AG04449 (cell line): ENCODE measurements at regions of chr4 and their contacts with region 1.

Region 1: DNA sequence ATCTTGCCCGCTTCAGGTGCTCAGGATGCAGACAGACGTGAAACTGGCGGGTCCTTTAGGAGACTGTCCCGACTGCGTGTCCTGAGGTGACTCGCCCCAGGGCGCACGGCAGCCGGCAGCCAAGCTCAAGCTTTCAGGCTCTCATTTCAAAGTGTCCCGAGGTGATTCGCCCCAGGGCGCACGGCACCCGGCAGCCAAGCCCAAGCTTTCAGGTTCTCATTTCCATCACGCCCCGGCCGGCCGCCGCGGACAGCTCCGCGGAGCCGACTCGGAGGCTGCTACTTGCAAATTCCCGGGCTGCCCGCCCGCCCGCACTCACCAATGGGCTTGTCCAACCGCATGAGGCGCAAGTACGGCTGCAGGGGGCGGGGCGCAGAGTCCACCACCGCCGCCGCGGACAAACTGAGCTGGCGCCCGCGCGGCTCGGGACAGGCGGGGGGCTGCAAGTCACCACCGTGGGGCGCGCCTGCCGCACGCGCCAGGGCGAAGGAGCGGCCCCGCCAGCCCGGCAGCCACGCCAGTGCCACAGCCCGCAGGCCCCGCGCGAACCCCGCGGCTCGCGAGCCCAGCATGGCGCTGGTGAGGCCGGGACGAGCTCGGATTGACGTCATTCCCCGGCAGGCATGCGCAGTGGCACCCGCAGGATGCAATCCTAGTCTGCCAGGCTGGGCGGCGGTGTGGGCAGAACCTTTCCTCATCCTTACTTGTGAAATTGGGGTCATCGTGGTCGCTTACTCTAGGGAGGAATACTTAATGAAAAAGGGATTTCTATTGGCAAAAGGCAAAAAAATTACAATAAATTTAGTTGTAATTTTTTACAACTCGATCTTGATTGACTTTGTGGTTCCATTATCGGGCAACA is at the start of gene COQ2:
- DNase-seq: peak; percentile 67
- H3K4me3 ChIP-seq: peak within 1 kb of the TSS; percentile 66
- CTCF ChIP-seq: peak; percentile 45

Region 2: DNA sequence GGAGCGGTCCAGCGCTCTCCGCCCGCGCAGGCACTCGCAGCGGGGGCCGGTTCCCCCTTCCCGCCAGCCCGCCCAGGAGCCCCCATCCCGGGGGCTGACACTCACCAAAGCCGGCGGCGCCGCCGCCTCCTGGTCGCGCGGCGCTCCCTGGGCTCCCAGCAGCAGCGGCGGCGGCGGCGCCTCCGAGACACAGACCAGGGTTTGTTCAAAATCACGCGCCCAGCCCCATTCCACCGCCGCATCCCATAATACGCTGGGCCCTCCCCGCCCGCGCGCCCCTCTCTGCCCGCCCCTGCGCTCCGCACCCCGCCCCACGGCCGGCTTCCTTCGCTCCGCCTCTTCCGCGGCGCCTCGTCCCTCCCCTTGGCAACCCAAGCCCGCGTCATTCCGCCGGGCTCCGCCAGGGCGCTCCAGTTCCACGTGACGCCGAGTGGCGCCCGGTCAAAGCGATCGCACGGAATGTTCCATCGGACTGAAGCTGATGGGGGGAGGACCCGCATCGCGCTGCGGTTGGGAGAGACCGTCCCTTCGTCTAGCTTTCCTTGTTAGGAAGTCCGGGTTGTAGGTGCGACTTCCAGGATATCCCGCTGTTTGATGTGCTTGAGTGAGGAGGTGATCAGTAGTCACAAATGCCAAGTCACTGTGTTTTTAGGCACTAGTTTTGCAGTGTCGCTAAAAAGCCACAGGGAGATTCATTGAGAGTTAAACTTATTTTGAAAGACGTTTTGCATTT is 271.6 kb before region 1 on chr4:
- CTCF ChIA-PET with region 1: interaction called, 10 read pairs
- POLR2A ChIA-PET with region 1: no interaction called
- DNase-seq: peak; percentile 79
- H3K4me3 ChIP-seq: peak overlapping the region; percentile 76
- CTCF ChIP-seq: peak; percentile 67

Region 3: DNA sequence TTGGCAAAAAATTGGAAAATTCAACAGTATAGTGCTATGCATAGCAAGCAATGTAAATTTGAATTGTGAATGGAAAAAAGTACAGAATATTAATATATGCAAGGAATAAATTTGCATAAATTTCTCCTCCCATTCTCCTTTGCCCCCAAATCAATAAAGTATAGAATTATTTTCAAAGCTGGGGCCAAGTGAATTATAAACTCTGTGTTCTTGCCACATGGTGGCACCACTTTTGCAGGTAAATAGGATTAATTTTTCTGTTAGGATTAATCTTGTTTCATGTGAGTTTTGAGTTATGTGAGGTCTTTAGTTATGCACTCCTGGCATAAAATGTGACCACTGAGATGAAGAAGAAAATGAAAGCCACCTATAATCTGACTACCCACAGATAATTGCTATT is 229.5 kb before region 1 on chr4:
- CTCF ChIA-PET with region 1: interaction called, 104 read pairs
- POLR2A ChIA-PET with region 1: no interaction called
- DNase-seq: no peak
- H3K4me3 ChIP-seq: no peak overlapping the region
- CTCF ChIP-seq: no peak

Region 4: DNA sequence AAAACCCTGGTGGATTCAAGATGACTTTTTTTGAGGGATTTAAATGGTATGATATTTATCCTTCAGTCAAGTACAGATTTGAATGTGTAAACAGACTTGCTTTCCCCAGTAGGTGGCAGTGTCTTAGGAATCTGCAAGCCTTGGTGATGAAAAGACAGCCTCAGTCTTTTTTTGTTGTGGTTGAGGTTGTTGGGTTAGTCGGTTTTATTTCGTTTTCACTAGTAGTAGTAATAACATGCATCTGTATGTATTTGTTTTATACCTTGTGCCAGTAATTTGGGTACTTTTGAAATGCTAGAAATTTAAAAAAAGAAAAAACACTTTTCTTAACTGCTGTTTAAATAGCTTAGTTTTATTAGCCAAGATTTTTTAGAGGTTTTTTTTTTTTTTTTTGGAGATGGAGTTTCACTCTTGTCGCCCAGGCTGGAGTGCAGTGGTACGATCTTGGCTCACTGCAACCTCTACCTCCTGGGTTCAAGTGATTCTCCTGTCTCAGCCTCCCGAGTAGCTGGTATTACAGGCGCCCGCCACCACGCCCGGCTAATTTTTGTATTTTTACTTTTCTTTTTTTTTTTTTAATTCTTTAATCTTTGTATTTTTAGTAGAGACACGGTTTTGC is 210.2 kb before region 1 on chr4:
- CTCF ChIA-PET with region 1: interaction called, 137 read pairs
- POLR2A ChIA-PET with region 1: interaction called, 8 read pairs
- DNase-seq: peak; percentile 45
- H3K4me3 ChIP-seq: no peak overlapping the region
- CTCF ChIP-seq: peak; percentile 64

Region 5: GRCh38 chr4:83259586-83259985 is 24.8 kb before region 1 on chr4:
- CTCF ChIA-PET with region 1: interaction called, 36 read pairs
- POLR2A ChIA-PET with region 1: no interaction called
- DNase-seq: no peak
- H3K4me3 ChIP-seq: no peak overlapping the region
- CTCF ChIP-seq: no peak

Region 6: GRCh38 chr4:83272900-83273299 is 11.5 kb before region 1 on chr4:
- CTCF ChIA-PET with region 1: interaction called, 36 read pairs
- POLR2A ChIA-PET with region 1: no interaction called
- DNase-seq: no peak
- H3K4me3 ChIP-seq: no peak overlapping the region
- CTCF ChIP-seq: no peak